ENCODE measurements at regions of chr11 and their contacts with region 1.

Region 1: GRCh38 chr11:5369793-5370192 is 13.8 kb upstream of the OR51M1 start:
- DNase-seq: peak; percentile 54
- H3K4me3 ChIP-seq: no peak overlapping the region
- CTCF ChIP-seq: peak; percentile 63

Region 2: DNA sequence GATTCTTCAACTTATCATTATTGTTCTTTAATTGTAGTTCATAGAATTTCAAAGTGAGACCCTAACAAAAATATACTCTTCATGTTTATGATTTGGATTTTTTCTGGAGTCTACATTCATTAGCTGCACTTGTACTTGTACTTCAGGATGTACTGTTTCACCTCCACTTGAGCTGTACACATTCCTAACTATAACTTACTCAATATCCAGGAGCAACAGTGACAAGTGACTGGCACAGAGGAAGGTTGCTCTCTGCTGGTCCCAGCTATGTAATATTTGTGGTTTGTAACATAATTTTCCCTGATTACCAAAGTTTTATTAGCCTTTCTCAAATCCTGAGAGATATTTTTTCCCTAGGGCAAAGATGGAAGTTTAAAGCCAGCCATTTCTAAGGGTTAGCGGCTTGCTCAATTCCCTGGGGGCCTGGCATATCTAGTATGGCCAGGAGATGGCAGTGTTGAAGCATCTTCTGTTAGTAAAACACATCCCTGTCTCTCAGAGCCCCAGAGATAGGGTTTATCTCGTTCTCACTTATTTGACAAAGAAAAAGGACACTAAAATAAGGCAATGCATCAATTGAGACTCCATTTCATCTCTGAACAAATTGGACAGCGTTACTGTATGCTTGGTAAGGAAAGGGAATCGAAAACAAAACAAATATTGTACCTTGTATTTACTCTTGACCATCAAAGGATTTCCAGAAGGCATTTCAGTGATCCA is 245.8 kb before region 1 on chr11:
- CTCF ChIA-PET with region 1: interaction called, 49 read pairs
- POLR2A ChIA-PET with region 1: no interaction called
- DNase-seq: peak; percentile 28
- H3K4me3 ChIP-seq: no peak overlapping the region
- CTCF ChIP-seq: peak; percentile 78

Region 3: GRCh38 chr11:5204787-5205186 is 165.0 kb before region 1 on chr11:
- CTCF ChIA-PET with region 1: interaction called, 66 read pairs
- POLR2A ChIA-PET with region 1: no interaction called
- DNase-seq: peak; percentile 44
- H3K4me3 ChIP-seq: no peak overlapping the region
- CTCF ChIP-seq: peak; percentile 46

Region 4: GRCh38 chr11:5210376-5210885 is 159.4 kb before region 1 on chr11:
- CTCF ChIA-PET with region 1: interaction called, 66 read pairs
- POLR2A ChIA-PET with region 1: no interaction called
- DNase-seq: no peak
- H3K4me3 ChIP-seq: no peak overlapping the region
- CTCF ChIP-seq: no peak

Region 5: GRCh38 chr11:5258543-5259262 is 111.1 kb before region 1 on chr11:
- CTCF ChIA-PET with region 1: no interaction called
- POLR2A ChIA-PET with region 1: no interaction called
- DNase-seq: no peak
- H3K4me3 ChIP-seq: no peak overlapping the region
- CTCF ChIP-seq: no peak

Region 6: GRCh38 chr11:5297721-5298323 is 72.0 kb before region 1 on chr11:
- CTCF ChIA-PET with region 1: no interaction called
- POLR2A ChIA-PET with region 1: no interaction called
- DNase-seq: no peak
- H3K4me3 ChIP-seq: no peak overlapping the region
- CTCF ChIP-seq: no peak

Region 7: GRCh38 chr11:5348551-5349194 is 21.1 kb before region 1 on chr11:
- CTCF ChIA-PET with region 1: no interaction called
- POLR2A ChIA-PET with region 1: no interaction called
- DNase-seq: no peak
- H3K4me3 ChIP-seq: no peak overlapping the region
- CTCF ChIP-seq: no peak

Region 8: DNA sequence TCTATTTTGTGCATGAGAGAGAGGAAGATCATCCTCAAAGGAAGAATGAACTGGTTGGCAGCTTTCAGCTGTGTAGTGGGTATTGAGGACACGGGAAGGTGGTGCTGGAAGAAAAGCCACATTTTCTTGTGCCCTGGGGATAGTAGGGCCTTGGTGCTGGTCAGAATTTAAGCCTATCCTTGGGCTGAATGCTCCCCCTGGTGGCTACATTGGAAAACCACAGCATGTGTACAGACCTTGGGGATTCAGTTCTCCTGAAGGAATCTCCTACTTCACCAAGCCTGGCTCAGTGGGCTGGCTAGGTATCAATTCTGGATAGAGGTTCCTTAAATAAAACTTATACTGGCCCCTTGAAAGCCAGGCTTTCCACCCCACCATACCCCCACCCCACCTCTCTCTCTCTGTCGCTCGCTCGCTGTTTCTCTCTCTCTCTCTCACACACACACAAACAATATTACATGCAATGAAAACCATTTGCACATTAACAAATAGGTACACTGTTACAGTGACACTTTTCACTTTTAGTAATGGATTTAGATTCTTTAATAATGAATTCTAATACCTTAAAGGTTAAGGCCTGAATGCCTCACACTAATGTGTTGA is 11.0 kb after region 1 on chr11:
- CTCF ChIA-PET with region 1: interaction called, 21 read pairs
- POLR2A ChIA-PET with region 1: no interaction called
- DNase-seq: no peak
- H3K4me3 ChIP-seq: no peak overlapping the region
- CTCF ChIP-seq: peak; percentile 87

Region 9: DNA sequence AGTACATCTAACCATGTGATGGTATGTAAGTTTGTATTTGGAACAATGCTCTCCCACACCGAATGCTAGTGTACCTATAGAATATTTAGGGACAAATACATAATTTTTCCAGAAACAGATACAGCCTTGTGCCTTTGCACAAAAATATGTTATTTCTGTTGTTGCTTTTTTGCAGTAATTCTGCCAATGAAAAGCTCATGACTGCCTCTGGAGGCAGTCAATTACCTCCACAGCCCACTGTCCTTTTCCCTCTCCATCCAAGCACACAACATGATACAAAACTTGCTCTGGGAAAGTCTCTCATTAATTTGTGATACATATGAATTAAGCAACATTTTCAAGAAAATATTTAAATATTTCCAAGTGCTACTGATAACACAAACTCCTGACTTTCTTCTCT is 82.9 kb after region 1 on chr11:
- CTCF ChIA-PET with region 1: no interaction called
- POLR2A ChIA-PET with region 1: no interaction called
- DNase-seq: no peak
- H3K4me3 ChIP-seq: no peak overlapping the region
- CTCF ChIP-seq: no peak

Measured in AG04449 (cell line).